ENCODE measurements at regions of chr16 and their contacts with region 1.

Region 1: DNA sequence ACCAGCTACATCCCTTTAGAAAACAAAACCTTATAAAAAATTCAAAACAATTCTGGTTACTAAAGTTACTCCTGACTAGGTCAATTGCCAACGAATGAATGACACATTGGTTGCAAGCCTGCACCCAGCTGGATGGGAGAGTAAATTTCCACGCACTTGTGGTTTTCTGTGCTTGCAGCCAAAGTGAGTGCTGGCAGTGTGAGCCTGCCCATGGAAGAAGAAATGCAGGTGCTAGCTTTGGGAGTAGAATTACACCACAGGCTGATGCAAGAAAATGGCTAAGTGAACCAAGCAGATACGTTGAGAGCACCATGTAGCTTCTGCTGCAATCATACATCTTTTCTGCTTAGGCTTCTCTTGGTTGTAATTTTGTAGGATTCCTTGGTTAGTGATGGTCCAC is 74.6 kb downstream of the SYCE1L start:
- DNase-seq: no peak
- ATAC-seq: no peak
- H3K4me3 ChIP-seq: no peak overlapping the region
- H3K27ac ChIP-seq: no peak overlapping the region
- H3K4me1 ChIP-seq: no peaks in the 10 kb centered on the region
- H3K27me3 ChIP-seq: no peaks in the 10 kb centered on the region
- CTCF ChIP-seq: no peak

Region 2: GRCh38 chr16:77335652-77336234 is 61.9 kb after region 1 on chr16:
- intact Hi-C with region 1: loop called in 1 of 2 experiments (anchors 10 kb)
- DNase-seq: no peak
- ATAC-seq: no peak
- H3K4me3 ChIP-seq: no peak overlapping the region
- H3K27ac ChIP-seq: no peak overlapping the region
- H3K4me1 ChIP-seq: no peaks in the 10 kb centered on the region
- H3K27me3 ChIP-seq: no peaks in the 10 kb centered on the region
- CTCF ChIP-seq: no peak